ENCODE measurements at regions of chr11 and their contacts with region 1.

Region 1: DNA sequence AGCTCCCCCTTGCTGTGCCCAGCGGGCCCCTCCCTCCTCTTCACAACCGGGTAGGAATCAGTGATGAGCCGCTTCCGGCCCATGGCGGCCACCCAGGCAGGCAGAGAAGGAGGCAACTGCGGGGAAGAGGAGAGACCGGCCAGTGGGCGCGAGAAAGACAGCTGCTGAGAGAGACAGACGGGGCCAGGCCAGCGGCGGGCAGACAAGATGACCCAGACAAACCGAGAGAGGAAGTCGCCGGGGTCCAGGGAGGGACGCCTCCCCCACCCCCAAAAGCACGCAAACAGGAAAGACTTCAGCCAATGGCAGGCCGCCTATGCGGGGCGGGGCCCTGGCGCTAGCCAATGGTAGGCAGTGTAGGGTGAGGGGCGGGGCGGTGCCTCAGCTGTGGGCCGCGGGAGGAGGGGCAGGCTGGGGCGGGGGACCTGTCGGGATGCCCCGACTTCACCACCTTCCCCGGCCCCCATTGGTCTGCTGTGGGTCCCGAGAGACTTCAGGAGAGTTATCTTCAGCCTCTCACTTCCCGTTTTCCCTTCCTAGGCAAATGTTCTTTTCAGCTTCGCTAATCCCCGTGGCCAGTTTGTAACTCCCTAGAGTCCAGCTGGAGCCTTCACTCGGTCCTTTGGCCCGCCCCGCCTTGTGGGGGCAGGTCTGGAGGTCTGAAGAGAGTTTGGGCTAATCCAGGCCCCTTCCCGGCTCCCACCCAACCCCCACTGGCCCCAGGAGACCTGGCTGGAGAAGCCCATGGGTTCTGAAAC is at the start of gene POLD4:
- DNase-seq: peak; percentile 98
- ATAC-seq: peak; percentile 78
- H3K4me3 Mint-ChIP-seq: peak within 1 kb of the TSS; percentile 95
- H3K27ac Mint-ChIP-seq: peak within 1 kb of the TSS; percentile 99
- H3K4me1 Mint-ChIP-seq: peaks cover 89% of the 10 kb centered on the region
- H3K27me3 Mint-ChIP-seq: no peaks in the 10 kb centered on the region
- CTCF ChIP-seq: no peak
- total RNA-seq, gene POLD4: 166 and 169 TPM in 2 replicates

Region 2: DNA sequence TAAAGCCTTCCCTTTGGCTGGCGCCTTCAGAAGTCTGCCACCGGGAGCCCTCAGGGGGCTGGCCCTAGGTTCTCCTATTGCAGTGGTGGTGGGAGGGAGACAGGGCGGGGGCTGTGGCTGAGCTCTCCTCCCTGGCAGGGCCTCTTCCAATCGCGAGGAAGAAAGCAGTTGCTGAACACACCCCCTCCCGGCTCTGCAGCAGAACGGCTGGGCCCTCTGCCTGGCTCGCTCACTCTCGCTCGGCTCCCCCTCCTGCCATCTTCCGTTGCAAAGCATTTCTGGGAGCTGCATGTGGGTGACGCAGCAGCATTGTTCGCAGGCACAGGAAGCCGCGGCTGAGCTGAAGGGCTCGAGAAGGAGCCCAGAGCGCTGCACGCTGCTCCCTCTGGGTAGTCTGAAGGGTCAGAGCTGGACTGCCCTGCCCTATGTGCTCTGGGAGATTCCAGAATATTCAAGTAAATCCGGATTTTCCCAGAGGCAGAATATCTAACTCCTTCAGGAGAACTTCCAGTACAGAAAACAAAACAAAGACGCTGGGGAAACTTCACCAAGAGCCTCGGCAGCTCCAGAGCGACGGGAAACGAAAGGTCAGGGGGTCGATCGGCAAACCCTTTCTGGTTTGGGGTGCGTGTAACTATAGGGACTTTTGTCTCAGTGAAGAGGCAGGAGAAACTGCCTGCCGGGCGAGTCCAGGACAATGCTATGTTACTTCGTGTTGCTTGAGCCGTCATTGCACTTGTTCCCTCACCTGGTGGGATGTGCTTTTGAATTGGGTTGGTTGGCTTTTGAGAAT is 113.5 kb before region 1 on chr11:
- CTCF ChIA-PET with region 1: interaction called, 3 read pairs
- POLR2A ChIA-PET with region 1: interaction called, 42 read pairs
- intact Hi-C with region 1: no loop called
- DNase-seq: peak; percentile 80
- ATAC-seq: peak; percentile 92
- H3K4me3 Mint-ChIP-seq: peak overlapping the region; percentile 99
- H3K27ac Mint-ChIP-seq: peak overlapping the region; percentile 96
- H3K4me1 Mint-ChIP-seq: peaks cover 48% of the 10 kb centered on the region
- H3K27me3 Mint-ChIP-seq: no peaks in the 10 kb centered on the region
- CTCF ChIP-seq: no peak

Region 3: GRCh38 chr11:67317205-67317887 is 36.1 kb before region 1 on chr11:
- CTCF ChIA-PET with region 1: interaction called, 13 read pairs
- POLR2A ChIA-PET with region 1: interaction called, 64 read pairs
- intact Hi-C with region 1: loop called (anchors 1 kb)
- DNase-seq: peak; percentile 96
- ATAC-seq: peak; percentile 82
- H3K4me3 Mint-ChIP-seq: peak overlapping the region; percentile 98
- H3K27ac Mint-ChIP-seq: peak overlapping the region; percentile 98
- H3K4me1 Mint-ChIP-seq: peaks cover 23% of the 10 kb centered on the region
- H3K27me3 Mint-ChIP-seq: no peaks in the 10 kb centered on the region
- CTCF ChIP-seq: no peak

Region 4: GRCh38 chr11:67401495-67402191 is 48.1 kb after region 1 on chr11 and contains the start of gene PPP1CA:
- CTCF ChIA-PET with region 1: interaction called, 10 read pairs
- POLR2A ChIA-PET with region 1: interaction called, 99 read pairs
- intact Hi-C with region 1: loop called (anchors 1 kb)
- DNase-seq: peak; percentile 96
- ATAC-seq: peak; percentile 72
- H3K4me3 Mint-ChIP-seq: peak within 1 kb of the TSS; percentile 86
- H3K27ac Mint-ChIP-seq: peak within 1 kb of the TSS; percentile 91
- H3K4me1 Mint-ChIP-seq: peaks cover 77% of the 10 kb centered on the region
- H3K27me3 Mint-ChIP-seq: no peaks in the 10 kb centered on the region
- CTCF ChIP-seq: no peak
- total RNA-seq, gene PPP1CA: 349 and 354 TPM in 2 replicates

Region 5: GRCh38 chr11:67439321-67439883 is 85.9 kb after region 1 on chr11:
- CTCF ChIA-PET with region 1: no interaction called
- POLR2A ChIA-PET with region 1: interaction called, 101 read pairs
- intact Hi-C with region 1: no loop called
- DNase-seq: peak; percentile 26
- ATAC-seq: no peak
- H3K4me3 Mint-ChIP-seq: peak overlapping the region; percentile 96
- H3K27ac Mint-ChIP-seq: peak overlapping the region; percentile 88
- H3K4me1 Mint-ChIP-seq: peaks cover 76% of the 10 kb centered on the region
- H3K27me3 Mint-ChIP-seq: no peaks in the 10 kb centered on the region
- CTCF ChIP-seq: no peak

Region 6: DNA sequence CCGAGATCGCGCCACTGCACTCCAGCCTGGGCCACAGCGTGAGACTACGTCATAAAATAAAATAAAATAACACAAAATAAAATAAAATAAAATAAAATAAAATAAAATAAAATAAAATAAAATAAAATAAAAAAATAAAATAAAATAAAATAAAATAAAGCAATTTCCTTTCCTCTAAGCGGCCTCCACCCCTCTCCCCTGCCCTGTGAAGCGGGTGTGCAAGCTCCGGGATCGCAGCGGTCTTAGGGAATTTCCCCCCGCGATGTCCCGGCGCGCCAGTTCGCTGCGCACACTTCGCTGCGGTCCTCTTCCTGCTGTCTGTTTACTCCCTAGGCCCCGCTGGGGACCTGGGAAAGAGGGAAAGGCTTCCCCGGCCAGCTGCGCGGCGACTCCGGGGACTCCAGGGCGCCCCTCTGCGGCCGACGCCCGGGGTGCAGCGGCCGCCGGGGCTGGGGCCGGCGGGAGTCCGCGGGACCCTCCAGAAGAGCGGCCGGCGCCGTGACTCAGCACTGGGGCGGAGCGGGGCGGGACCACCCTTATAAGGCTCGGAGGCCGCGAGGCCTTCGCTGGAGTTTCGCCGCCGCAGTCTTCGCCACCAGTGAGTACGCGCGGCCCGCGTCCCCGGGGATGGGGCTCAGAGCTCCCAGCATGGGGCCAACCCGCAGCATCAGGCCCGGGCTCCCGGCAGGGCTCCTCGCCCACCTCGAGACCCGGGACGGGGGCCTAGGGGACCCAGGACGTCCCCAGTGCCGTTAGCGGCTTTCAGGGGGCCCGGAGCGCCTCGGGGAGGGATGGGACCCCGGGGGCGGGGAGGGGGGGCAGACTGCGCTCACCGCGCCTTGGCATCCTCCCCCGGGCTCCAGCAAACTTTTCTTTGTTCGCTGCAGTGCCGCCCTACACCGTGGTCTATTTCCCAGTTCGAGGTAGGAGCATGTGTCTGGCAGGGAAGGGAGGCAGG is 230.0 kb after region 1 on chr11 and contains the start of gene GSTP1:
- CTCF ChIA-PET with region 1: interaction called, 3 read pairs
- POLR2A ChIA-PET with region 1: interaction called, 4 read pairs
- intact Hi-C with region 1: loop called (anchors 5 kb)
- DNase-seq: peak; percentile 84
- ATAC-seq: peak; percentile 76
- H3K4me3 Mint-ChIP-seq: peak within 1 kb of the TSS; percentile 89
- H3K27ac Mint-ChIP-seq: peak within 1 kb of the TSS; percentile 99
- H3K4me1 Mint-ChIP-seq: peaks cover 76% of the 10 kb centered on the region
- H3K27me3 Mint-ChIP-seq: no peaks in the 10 kb centered on the region
- CTCF ChIP-seq: no peak
- total RNA-seq, gene GSTP1: 331 and 362 TPM in 2 replicates

Region 7: DNA sequence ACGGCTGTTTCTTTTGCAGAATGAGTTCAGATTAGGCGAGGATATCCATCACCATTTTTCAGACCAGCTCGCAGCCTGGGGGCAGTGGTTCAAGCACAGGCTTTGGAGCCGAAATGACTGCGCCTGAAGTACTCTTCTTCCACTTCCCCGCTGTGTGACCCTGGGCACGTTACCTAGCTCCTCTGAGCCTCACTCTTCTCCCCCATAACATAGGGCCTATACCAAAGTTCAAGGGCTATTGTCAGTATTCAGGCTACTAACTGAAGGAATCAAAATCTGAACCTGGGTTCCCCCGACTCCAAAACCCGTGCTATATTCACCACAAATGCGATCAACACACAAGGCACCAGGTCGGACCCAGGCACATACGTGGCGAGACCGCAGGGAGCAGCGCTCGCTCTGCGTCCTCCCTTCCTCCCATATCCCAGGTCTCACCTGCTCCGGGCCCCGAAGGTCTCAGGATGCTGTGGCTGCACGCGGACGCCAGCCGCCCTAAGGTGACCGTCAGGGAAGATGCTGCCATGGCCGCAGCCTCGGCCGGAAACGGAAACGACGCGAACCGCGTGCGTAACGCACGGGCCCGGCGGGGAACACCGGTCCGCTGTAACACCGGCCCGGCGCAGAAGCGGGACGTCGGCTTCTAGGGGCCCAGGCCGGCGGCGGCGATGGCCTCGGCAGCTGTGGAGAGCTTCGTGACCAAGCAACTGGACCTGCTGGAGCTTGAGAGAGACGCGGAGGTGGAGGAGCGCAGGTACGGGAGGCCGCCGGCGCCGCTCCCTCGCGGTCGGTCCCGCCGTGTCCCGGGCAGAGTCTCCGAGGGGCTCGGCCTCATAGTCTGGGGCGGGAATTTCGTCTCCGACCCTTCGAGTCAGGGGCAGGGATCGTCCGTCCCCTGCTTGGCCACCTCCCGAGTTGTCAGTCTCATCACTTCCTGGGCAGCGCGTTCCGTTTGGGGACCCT is 1550.1 kb after region 1 on chr11 and contains the starts of genes IGHMBP2 and MRPL21:
- CTCF ChIA-PET with region 1: no interaction called
- POLR2A ChIA-PET with region 1: no interaction called
- intact Hi-C with region 1: no loop called
- DNase-seq: peak; percentile 87
- ATAC-seq: peak; percentile 96
- H3K4me3 Mint-ChIP-seq: peak within 1 kb of the TSS; percentile 97
- H3K27ac Mint-ChIP-seq: peak within 1 kb of the TSS; percentile 82
- H3K4me1 Mint-ChIP-seq: peaks cover 44% of the 10 kb centered on the region
- H3K27me3 Mint-ChIP-seq: no peaks in the 10 kb centered on the region
- CTCF ChIP-seq: no peak
- total RNA-seq, gene IGHMBP2: 24.2 and 33.8 TPM in 2 replicates
- total RNA-seq, gene MRPL21: 49.9 and 60.0 TPM in 2 replicates